ENCODE measurements at regions of chr2 and their contacts with region 1.

Region 1: DNA sequence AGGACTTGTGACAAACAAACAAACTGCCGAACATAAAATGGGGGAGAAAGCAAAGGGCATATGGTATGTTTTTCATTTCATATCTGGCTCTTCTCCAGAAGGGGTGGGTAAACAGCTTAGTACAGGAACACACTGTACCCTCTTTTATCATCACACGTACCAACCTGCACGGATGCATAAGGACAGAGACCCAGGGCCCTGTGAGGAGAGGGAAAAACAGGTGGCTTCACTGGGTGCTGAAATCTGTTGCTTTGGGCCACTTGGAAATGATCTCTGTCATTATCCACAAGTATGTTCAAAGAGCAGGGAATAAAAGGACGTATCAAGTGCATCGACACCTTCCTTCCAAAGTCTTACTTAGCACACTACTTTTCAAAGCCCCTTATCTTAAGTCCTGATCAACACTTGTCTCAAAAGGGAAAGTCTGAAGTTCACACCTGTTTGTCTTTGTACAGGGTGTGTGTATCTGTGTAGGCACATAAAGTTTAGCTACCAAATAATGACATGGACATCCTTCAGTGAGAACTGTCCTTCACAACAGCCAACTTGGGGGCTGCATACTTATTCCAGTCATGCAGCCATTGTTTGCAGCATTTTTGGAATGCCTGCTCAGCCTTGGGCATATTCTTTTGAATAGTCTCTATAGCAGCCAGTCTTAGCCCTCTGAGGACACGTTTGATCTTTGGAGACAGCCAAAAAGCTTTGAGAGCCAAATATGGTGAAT is 60.6 kb downstream of the IRS1 start:
- DNase-seq: peak in 1 of 2 experiments; percentile 7
- H3K4me3 ChIP-seq: no peak overlapping the region
- H3K4me3 Mint-ChIP-seq: peak overlapping the region; percentile 45
- H3K27ac Mint-ChIP-seq: peak overlapping the region; percentile 53
- H3K4me1 ChIP-seq: peaks cover 53% of the 10 kb centered on the region
- H3K4me1 Mint-ChIP-seq: peaks cover 9% of the 10 kb centered on the region
- H3K27me3 ChIP-seq: no peaks in the 10 kb centered on the region
- H3K27me3 Mint-ChIP-seq: no peaks in the 10 kb centered on the region
- CTCF ChIP-seq: no peak

Region 2: DNA sequence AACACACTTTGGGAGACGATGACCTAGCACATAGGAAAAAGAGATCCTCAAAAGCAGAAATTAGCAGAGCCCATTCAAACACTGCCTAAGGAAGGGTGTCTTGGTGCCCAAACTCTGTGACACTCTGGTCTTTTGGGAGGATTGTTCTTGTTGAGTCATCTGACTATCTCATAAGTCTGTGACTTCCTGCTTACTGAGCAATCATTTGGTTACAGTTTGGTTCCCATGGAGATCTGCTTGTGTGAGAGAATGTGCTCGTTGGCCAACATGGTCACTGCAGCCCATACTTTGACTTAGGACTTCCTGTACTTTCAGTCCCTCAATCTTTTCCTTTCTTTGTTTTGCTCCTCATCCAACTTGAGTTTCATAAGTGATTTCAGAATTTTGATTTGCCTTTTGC is 736.5 kb before region 1 on chr2:
- CTCF ChIA-PET with region 1: no interaction called
- POLR2A ChIA-PET with region 1: no interaction called
- intact Hi-C with region 1: no loop called
- DNase-seq: no peak
- H3K4me3 ChIP-seq: no peak overlapping the region
- H3K4me3 Mint-ChIP-seq: no peak overlapping the region
- H3K27ac Mint-ChIP-seq: no peak overlapping the region
- H3K4me1 ChIP-seq: no peaks in the 10 kb centered on the region
- H3K4me1 Mint-ChIP-seq: no peaks in the 10 kb centered on the region
- H3K27me3 ChIP-seq: no peaks in the 10 kb centered on the region
- H3K27me3 Mint-ChIP-seq: no peaks in the 10 kb centered on the region
- CTCF ChIP-seq: no peak

Region 3: GRCh38 chr2:226483745-226484619 is 255.0 kb before region 1 on chr2:
- CTCF ChIA-PET with region 1: interaction called, 3 read pairs
- POLR2A ChIA-PET with region 1: no interaction called
- intact Hi-C with region 1: loop called (anchors 5 kb)
- DNase-seq: peak; percentile 61 to 80
- H3K4me3 ChIP-seq: no peak overlapping the region
- H3K4me3 Mint-ChIP-seq: peak overlapping the region; percentile 63
- H3K27ac Mint-ChIP-seq: peak overlapping the region; percentile 96
- H3K4me1 ChIP-seq: peaks cover 56% of the 10 kb centered on the region
- H3K4me1 Mint-ChIP-seq: peaks cover 22% of the 10 kb centered on the region
- H3K27me3 ChIP-seq: no peaks in the 10 kb centered on the region
- H3K27me3 Mint-ChIP-seq: no peaks in the 10 kb centered on the region
- CTCF ChIP-seq: no peak

Region 4: GRCh38 chr2:226652388-226652787 is 86.6 kb before region 1 on chr2:
- CTCF ChIA-PET with region 1: no interaction called
- POLR2A ChIA-PET with region 1: no interaction called
- intact Hi-C with region 1: no loop called
- DNase-seq: no peak
- H3K4me3 ChIP-seq: no peak overlapping the region
- H3K4me3 Mint-ChIP-seq: no peak overlapping the region
- H3K27ac Mint-ChIP-seq: no peak overlapping the region
- H3K4me1 ChIP-seq: no peaks in the 10 kb centered on the region
- H3K4me1 Mint-ChIP-seq: no peaks in the 10 kb centered on the region
- H3K27me3 ChIP-seq: no peaks in the 10 kb centered on the region
- H3K27me3 Mint-ChIP-seq: no peaks in the 10 kb centered on the region
- CTCF ChIP-seq: no peak

Region 5: DNA sequence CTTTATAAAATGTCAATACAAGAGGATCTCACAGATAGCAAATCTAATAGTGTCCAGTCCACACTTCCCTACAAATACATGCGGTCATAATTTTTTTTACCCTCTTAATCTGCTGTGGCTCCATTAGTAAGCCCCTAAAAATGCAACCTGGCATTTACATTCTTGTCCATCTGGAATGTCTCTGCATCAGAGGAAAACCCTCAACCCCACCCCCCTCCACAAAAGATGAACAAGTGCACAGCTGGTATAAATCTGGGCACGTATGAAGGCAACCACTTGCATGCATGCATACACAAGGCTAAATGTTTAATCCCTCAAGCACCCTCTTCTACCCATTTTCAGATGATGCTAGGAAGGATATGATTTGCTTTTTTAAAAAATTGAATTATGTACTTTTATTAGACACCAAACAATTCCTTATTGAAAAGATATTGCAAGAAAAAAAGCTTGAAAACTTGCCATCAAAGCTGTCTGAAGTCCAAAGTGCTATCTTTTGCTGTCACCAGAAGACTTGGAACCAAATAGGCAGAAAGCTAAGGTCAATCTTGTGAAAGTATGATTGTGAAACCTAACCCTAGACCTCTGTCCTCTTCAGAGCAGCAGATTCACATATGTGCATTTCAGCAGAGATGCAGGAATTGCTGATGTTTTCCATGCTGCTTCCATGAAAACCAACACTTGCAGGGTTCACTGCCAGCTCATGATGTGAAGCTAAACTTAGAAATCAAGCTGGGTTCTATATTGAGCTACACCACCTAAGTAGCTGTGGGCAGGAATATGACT is 21.6 kb after region 1 on chr2:
- CTCF ChIA-PET with region 1: no interaction called
- POLR2A ChIA-PET with region 1: no interaction called
- intact Hi-C with region 1: loop called (anchors 2 kb)
- DNase-seq: peak in 1 of 2 experiments; percentile 19
- H3K4me3 ChIP-seq: no peak overlapping the region
- H3K4me3 Mint-ChIP-seq: no peak overlapping the region
- H3K27ac Mint-ChIP-seq: no peak overlapping the region
- H3K4me1 ChIP-seq: peaks cover 28% of the 10 kb centered on the region
- H3K4me1 Mint-ChIP-seq: peaks cover 4% of the 10 kb centered on the region
- H3K27me3 ChIP-seq: no peaks in the 10 kb centered on the region
- H3K27me3 Mint-ChIP-seq: no peaks in the 10 kb centered on the region
- CTCF ChIP-seq: no peak

Region 6: DNA sequence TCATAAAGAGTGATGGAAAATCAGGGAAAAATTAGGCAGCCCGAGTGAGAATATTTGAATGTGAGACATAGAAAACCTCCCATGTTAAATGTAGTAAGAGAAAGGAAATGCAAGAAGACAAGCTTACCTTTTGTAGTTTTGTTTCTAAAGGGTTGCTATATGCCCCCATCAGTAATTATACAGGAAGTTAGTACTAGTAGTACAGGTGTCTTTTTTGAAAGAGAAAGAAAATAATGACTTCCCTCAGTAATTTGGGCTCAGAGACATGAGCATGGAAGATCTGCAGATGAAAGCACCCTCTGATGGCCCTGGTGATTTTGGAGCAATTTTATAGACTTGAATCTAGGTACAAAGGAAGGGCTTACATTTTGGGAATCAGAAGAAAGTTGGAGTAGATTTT is 177.7 kb after region 1 on chr2:
- CTCF ChIA-PET with region 1: no interaction called
- POLR2A ChIA-PET with region 1: no interaction called
- intact Hi-C with region 1: no loop called
- DNase-seq: no peak
- H3K4me3 ChIP-seq: no peak overlapping the region
- H3K4me3 Mint-ChIP-seq: no peak overlapping the region
- H3K27ac Mint-ChIP-seq: no peak overlapping the region
- H3K4me1 ChIP-seq: no peaks in the 10 kb centered on the region
- H3K4me1 Mint-ChIP-seq: no peaks in the 10 kb centered on the region
- H3K27me3 ChIP-seq: no peaks in the 10 kb centered on the region
- H3K27me3 Mint-ChIP-seq: no peaks in the 10 kb centered on the region
- CTCF ChIP-seq: no peak

Measured in Caco-2 (cell line).